ENCODE measurements at regions of chr3 and their contacts with region 1.

Region 1: DNA sequence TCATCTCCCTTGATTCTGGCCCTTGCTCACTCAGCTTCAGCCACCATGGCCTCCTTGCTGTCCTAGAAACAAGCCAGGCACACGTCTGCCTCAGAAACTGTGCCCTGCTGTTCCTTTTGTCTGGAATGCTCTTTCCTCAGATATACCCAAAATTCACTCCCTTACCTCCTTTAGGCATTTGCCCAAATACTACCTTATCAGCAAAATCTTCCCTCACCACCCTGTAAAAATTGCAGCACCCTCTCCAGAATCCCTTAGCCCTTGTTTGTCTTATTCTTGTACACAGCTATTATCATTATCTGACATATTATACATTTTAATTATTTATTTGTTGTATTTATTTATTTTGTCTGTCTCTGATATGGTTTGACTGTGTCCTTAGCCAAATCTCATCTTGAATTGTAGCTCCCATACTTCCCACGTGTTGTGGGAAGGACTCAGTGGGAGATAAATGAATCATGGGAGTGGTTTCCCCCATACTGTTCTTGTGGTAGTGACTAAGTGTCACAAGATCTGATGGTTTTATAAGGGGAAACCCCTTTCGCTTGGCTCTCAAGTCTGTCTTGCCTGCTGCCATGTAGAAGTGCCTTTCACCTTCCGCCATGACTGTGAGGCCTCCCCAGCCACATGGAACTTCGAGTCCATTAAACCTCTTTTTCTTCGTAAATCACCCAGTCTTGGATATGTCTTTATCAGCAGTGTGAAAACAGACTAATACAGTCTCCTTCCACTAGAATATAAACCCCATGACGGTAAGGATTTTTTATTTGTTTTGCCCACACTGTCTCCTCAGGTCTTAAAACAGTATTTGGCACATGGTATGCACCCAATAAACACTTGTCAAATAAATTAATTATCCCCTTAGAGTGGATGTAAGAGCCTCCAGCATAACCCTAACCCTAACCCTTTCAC is 60.0 kb upstream of the STT3B start:
- DNase-seq: no peak
- H3K4me3 Mint-ChIP-seq: no peak overlapping the region
- H3K27ac Mint-ChIP-seq: no peak overlapping the region
- H3K4me1 Mint-ChIP-seq: peaks cover 14% of the 10 kb centered on the region
- H3K27me3 Mint-ChIP-seq: peaks cover 27% of the 10 kb centered on the region

Region 2: GRCh38 chr3:31077021-31077601 is 395.6 kb before region 1 on chr3:
- intact Hi-C with region 1: loop called (anchors 5 kb)
- DNase-seq: peak; percentile 18
- H3K4me3 Mint-ChIP-seq: no peak overlapping the region
- H3K27ac Mint-ChIP-seq: peak overlapping the region; percentile 52
- H3K4me1 Mint-ChIP-seq: peaks cover 34% of the 10 kb centered on the region
- H3K27me3 Mint-ChIP-seq: peaks cover 7% of the 10 kb centered on the region

Region 3: DNA sequence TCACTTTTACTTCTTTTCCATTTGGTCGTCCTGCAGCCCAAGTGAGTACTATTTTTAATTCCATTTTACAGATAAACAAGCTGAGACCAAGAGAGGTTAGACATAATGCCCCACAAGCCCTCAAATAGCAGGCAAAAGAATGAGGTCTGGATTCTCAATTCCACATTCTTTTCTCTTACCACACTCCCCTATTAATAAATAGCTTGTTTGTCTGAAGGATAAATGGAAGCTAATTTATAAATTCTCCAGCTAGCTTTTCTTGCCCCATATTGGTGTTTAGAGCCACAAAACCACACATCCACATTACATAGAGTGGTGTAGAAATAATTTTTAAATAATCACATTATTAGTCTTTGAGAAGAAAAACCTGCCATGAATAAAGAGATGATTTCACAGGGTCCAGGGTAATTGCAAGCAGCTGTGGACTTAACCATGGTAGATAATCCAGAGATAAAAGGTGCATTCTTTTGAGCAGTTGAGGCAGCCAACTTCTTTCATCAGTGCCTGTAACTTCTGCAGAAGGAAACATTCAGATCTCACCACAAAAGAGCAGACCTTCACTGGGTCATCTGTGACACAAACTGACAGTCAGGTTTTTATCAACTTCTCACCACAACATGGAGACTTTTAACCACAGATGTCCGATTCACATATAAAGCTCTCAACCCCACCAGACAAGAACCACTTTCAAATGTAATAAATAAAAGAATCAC is 253.4 kb before region 1 on chr3:
- intact Hi-C with region 1: loop called (anchors 5 kb)
- DNase-seq: no peak
- H3K4me3 Mint-ChIP-seq: no peak overlapping the region
- H3K27ac Mint-ChIP-seq: peak overlapping the region; percentile 19
- H3K4me1 Mint-ChIP-seq: peaks cover 78% of the 10 kb centered on the region
- H3K27me3 Mint-ChIP-seq: no peaks in the 10 kb centered on the region

Region 4: DNA sequence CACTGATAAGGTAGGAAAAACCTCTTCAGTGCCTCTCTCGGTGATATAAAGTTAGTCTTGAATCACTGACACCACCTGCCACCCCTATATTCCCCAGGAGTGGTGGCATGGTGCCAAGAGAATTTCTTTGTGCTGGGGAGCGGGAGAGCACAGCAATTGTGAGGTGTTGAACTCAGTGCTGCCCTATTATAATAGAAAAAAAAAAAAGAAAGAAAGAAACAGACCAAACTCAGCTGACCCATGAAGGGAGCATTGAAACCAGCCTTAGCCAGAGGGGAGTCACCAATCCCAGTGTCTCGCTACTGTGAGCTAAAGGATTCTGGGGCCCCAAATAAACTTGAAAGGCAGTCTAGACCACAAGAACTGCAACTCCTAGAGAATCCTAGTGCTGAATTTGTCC is 141.4 kb before region 1 on chr3:
- intact Hi-C with region 1: no loop called
- DNase-seq: no peak
- H3K4me3 Mint-ChIP-seq: no peak overlapping the region
- H3K27ac Mint-ChIP-seq: no peak overlapping the region
- H3K4me1 Mint-ChIP-seq: no peaks in the 10 kb centered on the region
- H3K27me3 Mint-ChIP-seq: no peaks in the 10 kb centered on the region

Region 5: DNA sequence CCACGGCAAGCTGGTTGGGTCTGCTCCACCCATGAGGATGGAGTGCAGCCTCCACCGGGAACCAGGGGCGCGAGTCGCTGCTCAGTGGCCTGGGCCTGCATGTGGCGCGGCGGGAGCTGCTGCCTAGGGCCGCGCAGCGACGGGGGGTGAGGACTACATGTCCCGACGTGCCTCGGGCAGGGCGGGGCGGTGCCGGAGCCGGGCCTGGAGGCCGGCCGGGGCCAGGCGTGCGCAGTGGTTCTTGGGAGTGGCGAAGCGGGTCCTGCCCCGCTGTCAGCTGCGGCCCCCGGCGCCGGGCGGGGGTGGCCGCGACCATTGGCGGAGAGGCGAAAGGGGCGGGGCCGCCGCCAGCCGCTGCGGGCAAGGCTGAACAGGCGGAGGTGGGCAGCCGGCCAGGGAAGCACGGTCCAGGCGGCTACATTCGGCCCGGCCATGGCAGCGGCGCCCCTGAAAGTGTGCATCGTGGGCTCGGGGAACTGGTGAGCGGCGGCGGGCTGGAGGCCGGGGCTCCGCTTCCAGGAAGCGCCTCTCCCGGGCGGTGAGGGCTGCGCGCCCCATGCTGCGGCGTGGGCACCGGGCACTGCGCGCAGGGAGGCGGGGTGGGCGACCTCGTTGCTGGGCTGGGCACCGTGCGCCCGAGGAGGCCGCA is 633.7 kb after region 1 on chr3 and contains the start of gene GPD1L:
- intact Hi-C with region 1: no loop called
- DNase-seq: peak; percentile 92
- H3K4me3 Mint-ChIP-seq: peak within 1 kb of the TSS; percentile 93
- H3K27ac Mint-ChIP-seq: peak within 1 kb of the TSS; percentile 80
- H3K4me1 Mint-ChIP-seq: peaks cover 27% of the 10 kb centered on the region
- H3K27me3 Mint-ChIP-seq: no peaks in the 10 kb centered on the region
- total RNA-seq, gene GPD1L: 18.9 and 19.8 TPM in 2 replicates